ENCODE measurements at regions of chr9 and their contacts with region 1.

Region 1: GRCh38 chr9:2241836-2242741 is 226.9 kb downstream of the SMARCA2 start:
- DNase-seq: peak; percentile 76
- H3K4me3 ChIP-seq: peak overlapping the region; percentile 32 to 37
- H3K27ac ChIP-seq: peak overlapping the region; percentile 40 to 53
- H3K4me1 ChIP-seq: no peaks in the 10 kb centered on the region
- H3K27me3 ChIP-seq: no peaks in the 10 kb centered on the region
- CTCF ChIP-seq: no peak
- POLR2A ChIP-seq: no peak

Region 2: DNA sequence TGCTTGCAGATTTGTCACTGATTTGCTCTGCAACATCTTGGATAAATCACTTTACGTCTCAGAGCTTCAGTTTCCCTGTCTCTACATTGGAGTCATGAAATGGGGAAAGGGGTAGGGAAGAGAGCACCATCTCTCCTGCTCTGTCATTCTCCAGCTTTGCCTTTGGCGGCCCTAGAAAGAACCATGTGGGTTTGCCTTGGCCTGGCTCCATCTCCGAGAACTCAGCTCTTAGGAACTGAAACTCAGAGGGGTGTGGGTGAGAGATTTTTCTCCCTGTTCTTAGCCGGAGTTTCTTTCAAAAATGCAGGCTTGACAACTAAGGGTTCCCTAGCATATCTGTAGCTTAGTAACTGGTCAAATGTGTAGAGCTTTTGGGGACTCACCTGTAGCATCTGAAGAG is 103.4 kb before region 1 on chr9:
- intact Hi-C with region 1: loop called (anchors 5 kb)
- DNase-seq: no peak
- H3K4me3 ChIP-seq: no peak overlapping the region
- H3K27ac ChIP-seq: no peak overlapping the region
- H3K4me1 ChIP-seq: no peaks in the 10 kb centered on the region
- H3K27me3 ChIP-seq: no peaks in the 10 kb centered on the region
- CTCF ChIP-seq: no peak
- POLR2A ChIP-seq: no peak

Region 3: GRCh38 chr9:2307480-2307879 is 65.4 kb after region 1 on chr9:
- intact Hi-C with region 1: loop called (anchors 10 kb)
- DNase-seq: no peak
- H3K4me3 ChIP-seq: no peak overlapping the region
- H3K27ac ChIP-seq: no peak overlapping the region
- H3K4me1 ChIP-seq: no peaks in the 10 kb centered on the region
- H3K27me3 ChIP-seq: no peaks in the 10 kb centered on the region
- CTCF ChIP-seq: no peak
- POLR2A ChIP-seq: no peak

Region 4: GRCh38 chr9:2727966-2728613 is 486.0 kb after region 1 on chr9:
- intact Hi-C with region 1: loop called (anchors 10 kb)
- DNase-seq: peak; percentile 39
- H3K4me3 ChIP-seq: no peak overlapping the region
- H3K27ac ChIP-seq: no peak overlapping the region
- H3K4me1 ChIP-seq: no peaks in the 10 kb centered on the region
- H3K27me3 ChIP-seq: no peaks in the 10 kb centered on the region
- CTCF ChIP-seq: peak; percentile 25 to 82 (median 64)
- POLR2A ChIP-seq: no peak

Region 5: GRCh38 chr9:2837915-2838314 is 595.8 kb after region 1 on chr9:
- intact Hi-C with region 1: loop called (anchors 10 kb)
- DNase-seq: no peak
- H3K4me3 ChIP-seq: no peak overlapping the region
- H3K27ac ChIP-seq: peak overlapping the region; percentile 1 to 13
- H3K4me1 ChIP-seq: peaks cover 10% of the 10 kb centered on the region
- H3K27me3 ChIP-seq: no peaks in the 10 kb centered on the region
- CTCF ChIP-seq: peak in 2 of 4 experiments; percentile 35 to 49
- POLR2A ChIP-seq: no peak

Measured in prostate gland (tissue), 2 donors.